AG04449 (cell line): ENCODE measurements at regions of chr4 and their contacts with region 1.

Region 1: DNA sequence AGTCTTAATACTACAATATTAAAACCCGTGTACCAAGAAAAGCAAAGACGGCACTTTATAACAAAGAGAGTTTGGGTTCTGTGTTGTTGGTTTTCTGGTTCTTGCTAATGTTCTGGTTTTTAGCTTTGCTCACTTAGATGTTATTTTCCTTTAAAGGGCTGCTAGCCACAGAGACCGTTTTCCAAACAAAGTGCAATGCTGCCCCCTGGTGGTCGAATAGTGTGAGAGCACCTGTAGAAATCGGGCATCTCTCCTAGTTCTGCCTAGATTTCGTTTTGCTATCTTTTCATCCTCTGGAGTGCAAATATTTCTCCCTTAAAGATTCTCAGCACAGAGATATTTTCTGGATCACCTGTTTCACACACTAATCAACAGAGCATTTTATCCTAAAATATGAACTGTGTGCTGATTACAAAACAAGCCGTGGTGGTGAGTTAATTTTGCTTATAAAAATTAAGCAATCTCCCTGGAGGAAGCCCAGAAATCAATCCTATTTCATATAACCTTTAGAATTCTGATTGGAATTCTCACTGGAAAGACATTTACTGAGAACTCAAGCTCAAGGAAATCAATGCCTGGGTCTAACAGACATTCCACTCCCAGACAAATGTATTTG is 334.5 kb upstream of the NOCT start:
- DNase-seq: peak; percentile 26
- H3K4me3 ChIP-seq: no peak overlapping the region
- CTCF ChIP-seq: peak; percentile 72

Region 2: DNA sequence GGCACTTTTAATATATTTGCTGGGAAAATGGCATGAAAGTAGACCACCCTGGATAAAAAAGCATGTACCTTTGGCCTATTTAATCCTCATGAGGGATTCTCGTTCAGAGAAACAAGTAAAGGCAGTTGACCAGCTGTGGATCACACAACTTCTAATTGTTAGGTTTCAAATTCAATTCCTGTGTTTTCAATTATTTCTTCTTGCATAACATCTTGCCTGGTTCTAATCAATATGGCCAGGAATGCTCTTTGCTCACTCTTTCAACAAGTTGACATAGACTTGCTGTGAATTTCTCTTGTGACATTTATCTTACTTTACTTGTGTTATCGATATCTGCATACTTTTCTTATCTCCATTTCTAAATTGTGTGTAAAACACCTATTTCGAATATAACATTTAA is 650.7 kb before region 1 on chr4:
- CTCF ChIA-PET with region 1: interaction called, 55 read pairs
- POLR2A ChIA-PET with region 1: no interaction called
- DNase-seq: no peak
- H3K4me3 ChIP-seq: no peak overlapping the region
- CTCF ChIP-seq: no peak

Region 3: DNA sequence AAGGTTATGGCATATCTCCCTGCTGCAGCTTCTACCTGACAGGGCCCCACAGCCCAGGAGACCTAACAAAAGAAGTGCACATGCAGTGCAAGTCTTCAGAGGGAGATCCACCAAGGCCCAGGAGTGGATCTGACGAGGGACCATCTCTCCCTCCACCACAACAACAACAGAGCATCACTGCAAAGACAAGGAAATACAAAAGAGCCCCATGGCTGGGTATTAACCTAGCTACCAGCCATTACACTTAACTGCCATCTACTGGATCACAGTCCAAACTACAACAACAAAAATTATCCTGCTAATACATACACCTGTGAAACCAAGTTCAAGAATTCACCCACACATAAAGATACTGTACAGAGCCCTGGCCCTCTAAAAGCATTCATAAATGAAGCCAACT is 158.7 kb before region 1 on chr4:
- CTCF ChIA-PET with region 1: no interaction called
- POLR2A ChIA-PET with region 1: no interaction called
- DNase-seq: no peak
- H3K4me3 ChIP-seq: no peak overlapping the region
- CTCF ChIP-seq: peak; percentile 18

Region 4: DNA sequence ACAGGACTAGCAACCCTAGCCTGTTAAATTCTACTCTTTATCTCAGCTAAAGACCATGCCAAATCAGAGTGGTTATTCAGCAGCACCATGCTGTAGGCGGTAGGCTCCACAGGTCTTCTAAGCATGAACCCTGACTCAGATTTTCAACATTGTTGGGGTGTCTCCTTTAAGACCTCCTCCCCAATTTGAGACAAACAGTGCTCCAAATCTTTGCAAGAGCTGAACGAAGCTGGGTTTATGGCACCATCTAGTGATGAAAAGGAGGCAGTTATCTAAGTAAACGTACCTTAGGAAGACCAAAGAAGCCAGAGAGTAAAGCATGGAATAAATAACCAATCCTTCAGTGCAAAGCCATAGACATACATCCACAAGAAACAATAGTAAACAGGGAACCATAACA is 104.4 kb before region 1 on chr4:
- CTCF ChIA-PET with region 1: interaction called, 21 read pairs
- POLR2A ChIA-PET with region 1: no interaction called
- DNase-seq: no peak
- H3K4me3 ChIP-seq: no peak overlapping the region
- CTCF ChIP-seq: peak; percentile 36

Region 5: GRCh38 chr4:138697851-138698250 is 16.8 kb after region 1 on chr4:
- CTCF ChIA-PET with region 1: interaction called, 36 read pairs
- POLR2A ChIA-PET with region 1: no interaction called
- DNase-seq: no peak
- H3K4me3 ChIP-seq: no peak overlapping the region
- CTCF ChIP-seq: no peak

Region 6: GRCh38 chr4:138919094-138919936 is 238.2 kb after region 1 on chr4:
- CTCF ChIA-PET with region 1: interaction called, 12 read pairs
- POLR2A ChIA-PET with region 1: no interaction called
- DNase-seq: no peak
- H3K4me3 ChIP-seq: no peak overlapping the region
- CTCF ChIP-seq: peak; percentile 93